ENCODE measurements at regions of chr1 and their contacts with region 1.

Region 1: GRCh38 chr1:170664828-170665612 is 1.1 kb downstream of the PRRX1 start:
- DNase-seq: peak; percentile 61
- ATAC-seq: peak; percentile 67
- H3K4me3 ChIP-seq: peak overlapping the region; percentile 88
- H3K27ac ChIP-seq: peak overlapping the region; percentile 80
- H3K4me1 ChIP-seq: peaks cover 14% of the 10 kb centered on the region
- H3K27me3 ChIP-seq: no peaks in the 10 kb centered on the region
- CTCF ChIP-seq: peak; percentile 38
- POLR2A ChIP-seq: 0 out of 2 replicates have a peak, but pooled peaks have one; percentile 30
- RAD21 ChIP-seq: peak; percentile 28

Region 2: GRCh38 chr1:169707912-169708604 is 957.0 kb before region 1 on chr1:
- CTCF ChIA-PET with region 1: no interaction called
- POLR2A ChIA-PET with region 1: no interaction called
- dilution Hi-C with region 1: no loop called
- in situ Hi-C with region 1: no loop called
- intact Hi-C with region 1: no loop called
- DNase-seq: no peak
- ATAC-seq: no peak
- H3K4me3 ChIP-seq: no peak overlapping the region
- H3K27ac ChIP-seq: no peak overlapping the region
- H3K4me1 ChIP-seq: no peaks in the 10 kb centered on the region
- H3K27me3 ChIP-seq: no peaks in the 10 kb centered on the region; the same call in 1 of the 2 replicates
- CTCF ChIP-seq: no peak
- POLR2A ChIP-seq: no peak
- RAD21 ChIP-seq: no peak

Region 3: DNA sequence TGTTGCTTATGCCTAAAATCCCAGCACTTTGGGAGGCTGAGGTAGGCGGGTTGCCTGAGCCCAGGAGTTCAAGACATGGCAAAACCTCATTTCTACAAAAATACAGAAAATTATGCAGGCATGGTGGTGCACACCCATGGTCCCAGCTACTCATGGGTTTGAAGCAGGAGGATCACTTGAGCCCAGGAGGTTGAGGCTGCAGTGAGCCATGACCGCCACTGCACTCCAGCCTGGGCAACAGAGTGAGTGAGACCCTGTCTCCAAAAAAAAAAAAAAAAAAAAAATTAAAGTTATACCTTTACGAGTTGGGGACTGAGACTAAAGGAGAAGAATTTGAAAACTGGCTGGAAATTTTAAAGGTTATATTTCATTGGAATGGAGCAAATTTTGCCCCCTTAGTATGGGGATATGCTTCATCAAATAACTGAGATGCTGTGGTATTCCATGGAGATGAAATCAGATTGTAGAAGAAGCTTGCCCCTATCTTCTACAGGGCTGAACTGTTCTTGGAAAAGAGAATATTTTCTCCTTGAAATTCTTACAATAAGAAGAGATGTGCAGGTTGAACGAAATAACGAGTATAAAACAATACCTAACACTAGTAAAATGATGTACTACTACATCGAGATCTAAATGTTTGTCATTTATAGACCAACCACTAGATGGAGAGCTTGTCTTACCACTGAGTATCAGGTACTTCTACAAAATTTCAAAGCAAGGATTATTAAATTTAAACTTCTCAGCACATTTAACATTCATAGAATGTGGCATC is 736.4 kb before region 1 on chr1:
- CTCF ChIA-PET with region 1: no interaction called
- POLR2A ChIA-PET with region 1: no interaction called
- dilution Hi-C with region 1: no loop called
- in situ Hi-C with region 1: loop called (anchors 25 kb)
- intact Hi-C with region 1: loop called (anchors 1 kb)
- DNase-seq: peak; percentile 72
- ATAC-seq: peak; percentile 80; the same call in 1 of the 2 replicates
- H3K4me3 ChIP-seq: no peak overlapping the region
- H3K27ac ChIP-seq: no peak overlapping the region
- H3K4me1 ChIP-seq: no peaks in the 10 kb centered on the region; the same call in 1 of the 2 replicates
- H3K27me3 ChIP-seq: no peaks in the 10 kb centered on the region
- CTCF ChIP-seq: peak; percentile 87
- POLR2A ChIP-seq: peak; percentile 38; the same call in 1 of the 2 replicates
- RAD21 ChIP-seq: peak; percentile 90

Region 4: GRCh38 chr1:170074250-170075157 is 590.5 kb before region 1 on chr1 and contains the start of gene KIFAP3:
- CTCF ChIA-PET with region 1: no interaction called
- POLR2A ChIA-PET with region 1: no interaction called
- dilution Hi-C with region 1: no loop called
- in situ Hi-C with region 1: no loop called
- intact Hi-C with region 1: loop called (anchors 2 kb)
- DNase-seq: peak; percentile 96
- ATAC-seq: peak; percentile 100
- H3K4me3 ChIP-seq: peak within 1 kb of the TSS; percentile 76
- H3K27ac ChIP-seq: peak within 1 kb of the TSS; percentile 39
- H3K4me1 ChIP-seq: no peaks in the 10 kb centered on the region
- H3K27me3 ChIP-seq: no peaks in the 10 kb centered on the region
- CTCF ChIP-seq: peak; percentile 52
- POLR2A ChIP-seq: peak; percentile 39; the same call in 1 of the 2 replicates
- RAD21 ChIP-seq: peak; percentile 43
- total RNA-seq, gene KIFAP3: 10.9 and 22.2 TPM in 2 replicates

Region 5: DNA sequence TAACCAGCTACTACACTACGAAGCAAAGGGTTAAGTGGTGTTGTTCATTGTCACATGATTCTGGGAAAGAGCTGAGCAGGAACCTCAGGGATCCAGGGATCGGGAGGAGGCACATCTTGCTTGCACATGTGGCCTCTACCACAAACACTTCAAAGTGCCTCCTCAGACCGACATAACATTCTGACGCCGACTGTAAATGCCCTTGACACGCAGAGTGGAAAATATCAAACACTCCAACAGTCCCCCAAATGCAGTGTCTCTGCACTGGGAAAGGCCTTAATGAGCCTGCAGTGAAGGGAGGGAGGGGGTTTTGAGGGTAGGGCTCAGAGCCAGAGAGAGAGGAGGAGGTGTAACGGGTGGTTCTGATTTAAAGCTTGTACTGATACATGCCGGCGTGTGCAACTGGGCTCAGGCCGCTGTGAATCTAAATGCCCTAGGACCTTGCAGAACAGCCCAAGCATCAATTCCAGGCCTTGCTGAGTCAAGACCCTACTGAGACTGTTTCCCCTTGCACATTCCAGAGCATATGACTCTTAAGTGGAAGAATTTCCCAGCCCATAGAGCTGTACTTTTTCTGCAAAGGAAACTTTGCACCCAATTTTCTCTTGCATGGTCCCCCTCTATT is 355.5 kb before region 1 on chr1:
- CTCF ChIA-PET with region 1: no interaction called
- POLR2A ChIA-PET with region 1: interaction called, 5 read pairs
- dilution Hi-C with region 1: no loop called
- in situ Hi-C with region 1: no loop called
- intact Hi-C with region 1: loop called (anchors 5 kb)
- DNase-seq: peak; percentile 95
- ATAC-seq: peak; percentile 99
- H3K4me3 ChIP-seq: no peak overlapping the region
- H3K27ac ChIP-seq: peak overlapping the region; percentile 90
- H3K4me1 ChIP-seq: peaks cover 11% of the 10 kb centered on the region
- H3K27me3 ChIP-seq: no peaks in the 10 kb centered on the region
- CTCF ChIP-seq: no peak
- POLR2A ChIP-seq: no peak
- RAD21 ChIP-seq: no peak

Region 6: GRCh38 chr1:170531758-170532657 is 133.0 kb before region 1 on chr1 and contains the start of gene GORAB:
- CTCF ChIA-PET with region 1: no interaction called
- POLR2A ChIA-PET with region 1: no interaction called
- dilution Hi-C with region 1: no loop called
- in situ Hi-C with region 1: loop called (anchors 10 kb)
- intact Hi-C with region 1: loop called (anchors 1 kb)
- DNase-seq: peak; percentile 97
- ATAC-seq: peak; percentile 96
- H3K4me3 ChIP-seq: peak within 1 kb of the TSS; percentile 62
- H3K27ac ChIP-seq: peak within 1 kb of the TSS; percentile 85
- H3K4me1 ChIP-seq: no peaks in the 10 kb centered on the region; the same call in 1 of the 2 replicates
- H3K27me3 ChIP-seq: no peaks in the 10 kb centered on the region
- CTCF ChIP-seq: no peak
- POLR2A ChIP-seq: peak; percentile 95
- RAD21 ChIP-seq: peak; percentile 35
- total RNA-seq, gene GORAB: 11.3 and 17.2 TPM in 2 replicates

Region 7: GRCh38 chr1:170765712-170766330 is 100.8 kb after region 1 on chr1:
- CTCF ChIA-PET with region 1: interaction called, 3 read pairs
- POLR2A ChIA-PET with region 1: no interaction called
- dilution Hi-C with region 1: no loop called
- in situ Hi-C with region 1: no loop called
- intact Hi-C with region 1: loop called (anchors 2 kb)
- DNase-seq: peak; percentile 64
- ATAC-seq: peak; percentile 87
- H3K4me3 ChIP-seq: no peak overlapping the region
- H3K27ac ChIP-seq: no peak overlapping the region
- H3K4me1 ChIP-seq: no peaks in the 10 kb centered on the region
- H3K27me3 ChIP-seq: no peaks in the 10 kb centered on the region
- CTCF ChIP-seq: peak; percentile 75
- POLR2A ChIP-seq: no peak
- RAD21 ChIP-seq: peak; percentile 84

Region 8: GRCh38 chr1:170929835-170930554 is 265.0 kb after region 1 on chr1:
- CTCF ChIA-PET with region 1: no interaction called
- POLR2A ChIA-PET with region 1: no interaction called
- dilution Hi-C with region 1: no loop called
- in situ Hi-C with region 1: loop called (anchors 10 kb)
- intact Hi-C with region 1: loop called (anchors 2 kb)
- DNase-seq: peak; percentile 66
- ATAC-seq: peak; percentile 98
- H3K4me3 ChIP-seq: no peak overlapping the region
- H3K27ac ChIP-seq: no peak overlapping the region
- H3K4me1 ChIP-seq: no peaks in the 10 kb centered on the region
- H3K27me3 ChIP-seq: no peaks in the 10 kb centered on the region; the same call in 1 of the 2 replicates
- CTCF ChIP-seq: peak; percentile 76
- POLR2A ChIP-seq: no peak
- RAD21 ChIP-seq: peak; percentile 79

Measured in IMR-90 (cell line).